ENCODE measurements at regions of chr2 and their contacts with region 1.

Region 1: DNA sequence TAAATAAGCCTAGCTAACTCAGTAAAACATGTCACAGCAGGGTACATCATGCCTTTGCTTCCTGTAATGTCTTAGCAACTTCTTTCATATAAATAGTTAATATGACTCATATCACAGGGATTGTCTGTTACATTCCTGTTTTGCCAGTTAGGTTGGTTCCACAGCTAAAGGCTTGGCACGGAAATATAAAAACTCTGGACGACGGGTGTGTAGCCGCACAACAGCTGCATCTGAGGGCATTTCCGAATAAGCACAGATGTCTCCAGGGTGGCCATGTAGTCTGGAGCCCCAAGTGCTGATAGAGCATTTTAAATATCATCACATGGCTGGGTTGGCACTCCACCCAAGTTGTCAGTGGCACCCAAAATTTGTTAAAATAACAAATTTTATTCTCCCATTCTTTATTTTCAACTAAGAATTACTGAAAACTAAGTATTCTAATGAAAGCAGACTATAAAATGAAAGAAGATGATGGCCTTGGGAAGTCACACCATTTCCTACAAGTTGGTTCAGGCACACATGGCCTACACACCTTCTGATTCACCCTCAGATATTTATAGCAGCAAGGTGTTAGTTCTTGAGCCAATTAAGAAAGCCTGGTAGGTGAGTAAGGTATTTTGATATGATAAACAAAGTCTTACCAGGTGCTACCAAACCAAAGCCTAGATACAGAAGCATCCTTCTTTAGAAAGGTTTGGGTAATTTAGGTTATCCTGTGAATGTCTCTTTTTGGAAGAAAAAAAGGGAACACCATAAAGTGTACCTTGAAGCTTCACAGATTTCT is 61.8 kb upstream of the STK17B start:
- DNase-seq: peak in 1 of 2 donors; percentile 25
- ATAC-seq: peak; percentile 38 to 87 (median 72)
- H3K4me3 ChIP-seq: no peak overlapping the region
- H3K27ac ChIP-seq: peak overlapping the region in 8 of 10 donors; percentile 13 to 84 (median 35)
- H3K4me1 ChIP-seq: peaks cover 0 to 65% (median 20%) of the 10 kb centered on the region in 9 donors
- H3K27me3 ChIP-seq: no peaks in the 10 kb centered on the region
- CTCF ChIP-seq: no peak

Region 2: DNA sequence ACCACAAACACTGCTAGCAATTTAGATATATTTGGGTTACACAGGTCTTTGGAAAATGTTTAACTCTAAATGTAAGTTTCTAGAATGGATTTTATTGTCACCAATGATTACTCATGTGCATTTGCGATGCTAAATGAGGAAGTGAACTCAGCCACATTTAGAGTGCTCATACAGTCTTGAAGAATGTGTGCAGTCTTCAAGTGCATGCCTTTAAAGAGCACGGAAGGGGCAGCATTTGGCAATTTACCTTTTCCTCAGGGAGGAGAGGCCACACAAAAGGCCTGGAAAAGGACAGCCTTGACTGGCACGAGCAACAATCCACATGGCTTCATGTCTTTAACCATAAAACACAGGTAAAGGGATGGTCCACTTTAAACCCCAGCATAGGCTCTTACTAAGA is 16.6 kb after region 1 on chr2:
- intact Hi-C with region 1: loop called in 1 of 10 experiments (anchors 1 kb)
- DNase-seq: no peak
- ATAC-seq: peak in 2 of 8 donors; percentile 21 to 32
- H3K4me3 ChIP-seq: no peak overlapping the region
- H3K27ac ChIP-seq: peak overlapping the region in 1 of 10 donors; percentile 27
- H3K4me1 ChIP-seq: peaks cover 0 to 45% (median 7%) of the 10 kb centered on the region in 9 donors
- H3K27me3 ChIP-seq: no peaks in the 10 kb centered on the region
- CTCF ChIP-seq: no peak

Region 3: DNA sequence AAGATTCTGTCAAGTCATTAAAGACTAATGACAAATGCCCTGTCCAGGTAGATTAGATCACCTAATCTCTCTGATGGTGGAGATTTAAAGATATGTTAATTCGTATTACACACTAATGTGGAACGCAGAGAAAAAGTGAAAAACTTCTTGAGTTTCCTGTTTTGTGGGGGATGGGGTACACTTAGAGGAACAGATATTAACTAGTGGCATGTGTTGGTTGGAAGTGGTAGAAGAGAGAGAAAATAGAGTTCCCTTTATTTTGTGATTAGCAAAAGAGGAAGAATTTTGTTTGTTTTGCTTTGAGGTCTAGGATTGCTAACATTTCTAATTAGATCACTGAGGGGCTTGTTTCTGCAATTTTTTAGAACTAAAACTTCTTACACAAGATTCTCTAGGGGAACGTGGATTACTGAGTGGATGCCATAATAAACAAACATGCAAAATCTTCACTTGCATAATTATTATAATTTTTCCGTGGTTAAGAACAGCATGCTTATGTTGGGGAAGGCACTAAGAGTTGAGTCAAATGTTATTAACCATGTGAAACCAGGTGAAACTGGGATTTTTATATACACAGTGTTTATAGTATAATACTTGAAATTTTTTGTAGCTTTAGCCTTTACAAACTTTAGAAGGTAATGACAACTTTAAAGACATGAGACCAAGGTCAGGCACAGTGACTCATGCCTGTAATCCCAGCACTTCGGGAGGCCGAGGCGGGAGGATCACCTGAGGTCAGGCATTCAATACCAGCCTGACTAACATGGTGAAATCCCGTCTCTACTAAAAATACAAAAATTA is 35.5 kb after region 1 on chr2:
- intact Hi-C with region 1: loop called in 1 of 10 experiments (anchors 5 kb)
- DNase-seq: no peak
- ATAC-seq: peak in 7 of 8 donors; percentile 52 to 76 (median 62)
- H3K4me3 ChIP-seq: peak overlapping the region in 1 of 10 donors; percentile 8
- H3K27ac ChIP-seq: peak overlapping the region in 9 of 10 donors; percentile 17 to 81 (median 36)
- H3K4me1 ChIP-seq: peaks cover 0 to 58% (median 27%) of the 10 kb centered on the region in 9 donors
- H3K27me3 ChIP-seq: no peaks in the 10 kb centered on the region
- CTCF ChIP-seq: no peak

Region 4: DNA sequence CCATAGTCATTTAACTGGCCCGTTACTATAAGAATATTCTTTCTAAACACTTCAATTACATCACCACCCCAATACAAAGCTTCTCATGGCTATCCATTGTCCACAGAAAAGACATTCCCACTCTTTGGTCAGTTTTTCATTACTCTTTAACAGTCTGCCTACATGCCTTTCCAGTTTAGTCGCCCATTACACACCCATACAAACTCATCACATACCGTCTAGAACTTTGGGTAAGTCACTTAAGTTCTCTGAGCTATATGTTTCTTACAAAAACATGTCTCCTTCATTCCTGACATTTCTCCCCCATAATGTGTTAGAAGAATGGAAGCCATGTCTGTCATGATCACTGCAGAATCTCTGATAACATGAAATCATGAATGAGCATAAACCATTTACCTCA is 46.3 kb after region 1 on chr2:
- intact Hi-C with region 1: no loop called
- DNase-seq: no peak
- ATAC-seq: no peak
- H3K4me3 ChIP-seq: no peak overlapping the region
- H3K27ac ChIP-seq: no peak overlapping the region
- H3K4me1 ChIP-seq: peaks cover 5 to 32% (median 21%) of the 10 kb centered on the region in 9 donors
- H3K27me3 ChIP-seq: no peaks in the 10 kb centered on the region
- CTCF ChIP-seq: no peak

Region 5: GRCh38 chr2:196384729-196385128 is 151.5 kb after region 1 on chr2:
- intact Hi-C with region 1: no loop called
- DNase-seq: no peak
- ATAC-seq: no peak
- H3K4me3 ChIP-seq: no peak overlapping the region
- H3K27ac ChIP-seq: no peak overlapping the region
- H3K4me1 ChIP-seq: peaks cover 0 to 33% (median 21%) of the 10 kb centered on the region in 9 donors
- H3K27me3 ChIP-seq: no peaks in the 10 kb centered on the region
- CTCF ChIP-seq: no peak